Mammary epithelial cell (primary cell): ENCODE measurements at regions of chr3 and their contacts with region 1.

Region 1: GRCh38 chr3:632572-633170 is 436.1 kb downstream of the CHL1 start:
- DNase-seq: peak; percentile 47
- H3K4me3 ChIP-seq: no peak overlapping the region
- H3K27ac ChIP-seq: no peak overlapping the region
- H3K4me1 ChIP-seq: no peaks in the 10 kb centered on the region
- H3K27me3 ChIP-seq: no peaks in the 10 kb centered on the region
- CTCF ChIP-seq: peak; percentile 72 to 75

Region 2: DNA sequence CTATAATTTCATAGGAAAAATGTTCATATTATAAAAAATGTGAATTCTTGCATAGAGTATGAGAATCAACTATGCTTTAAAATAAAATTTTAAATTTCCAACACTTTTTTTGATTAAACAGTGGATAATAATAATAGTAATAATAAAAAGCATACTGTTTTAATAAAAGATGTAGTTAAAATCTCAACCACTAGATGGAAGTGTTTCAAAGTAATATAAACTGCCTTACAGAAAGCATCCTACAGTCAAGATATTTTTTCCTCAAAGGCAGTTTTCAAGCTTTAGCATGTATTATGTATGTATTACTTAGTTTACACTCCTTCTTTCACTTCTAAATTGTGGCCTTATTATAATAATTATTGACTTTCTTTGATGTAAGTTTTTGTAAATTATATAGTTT is 218.6 kb before region 1 on chr3:
- CTCF ChIA-PET with region 1: no interaction called
- dilution Hi-C with region 1: no loop called
- in situ Hi-C with region 1: no loop called
- intact Hi-C with region 1: loop called (anchors 10 kb)
- DNase-seq: no peak
- H3K4me3 ChIP-seq: no peak overlapping the region
- H3K27ac ChIP-seq: no peak overlapping the region
- H3K4me1 ChIP-seq: no peaks in the 10 kb centered on the region
- H3K27me3 ChIP-seq: no peaks in the 10 kb centered on the region
- CTCF ChIP-seq: peak; percentile 13 to 36

Region 3: DNA sequence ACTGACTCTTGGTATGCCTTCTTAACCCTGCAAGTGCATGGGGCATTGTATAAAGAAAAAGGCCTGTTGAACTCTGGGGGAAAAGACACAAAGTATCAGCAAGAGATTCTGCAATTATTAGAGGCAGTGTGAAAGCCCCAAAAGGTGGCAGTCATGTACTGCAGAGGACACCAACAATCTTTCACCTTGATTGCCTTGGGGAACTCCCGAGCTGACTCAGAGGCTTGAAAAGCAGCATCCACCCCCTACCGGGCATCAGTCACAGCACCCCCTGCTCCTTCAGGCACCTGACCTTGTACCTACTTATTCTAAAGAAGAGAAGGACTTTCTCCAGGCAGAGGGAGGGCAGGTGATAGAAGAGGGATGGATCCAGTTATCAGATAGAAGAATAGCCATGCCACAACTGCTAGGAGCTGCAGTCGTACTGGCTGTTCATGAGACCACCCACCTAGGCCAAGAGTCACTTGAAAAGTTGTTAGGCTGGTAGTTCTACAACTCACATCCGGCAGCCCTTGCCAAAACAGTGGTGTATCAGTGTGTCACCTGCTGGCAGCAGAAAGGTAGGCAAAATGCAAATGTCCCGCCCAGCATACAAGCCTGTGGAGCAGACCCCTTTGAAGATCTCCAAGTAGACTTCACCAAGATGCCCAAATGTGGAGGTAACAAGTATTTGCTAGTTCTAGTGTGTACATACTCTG is 218.6 kb after region 1 on chr3:
- CTCF ChIA-PET with region 1: no interaction called
- dilution Hi-C with region 1: no loop called
- in situ Hi-C with region 1: loop called (anchors 5 to 25 kb)
- intact Hi-C with region 1: loop called (anchors 1 kb)
- DNase-seq: peak; percentile 63
- H3K4me3 ChIP-seq: no peak overlapping the region
- H3K27ac ChIP-seq: no peak overlapping the region
- H3K4me1 ChIP-seq: no peaks in the 10 kb centered on the region
- H3K27me3 ChIP-seq: no peaks in the 10 kb centered on the region
- CTCF ChIP-seq: peak in 1 of 2 donors; percentile 41

Region 4: GRCh38 chr3:901953-902778 is 269.5 kb after region 1 on chr3:
- CTCF ChIA-PET with region 1: no interaction called
- dilution Hi-C with region 1: no loop called
- in situ Hi-C with region 1: no loop called
- intact Hi-C with region 1: loop called (anchors 1 kb)
- DNase-seq: peak; percentile 5
- H3K4me3 ChIP-seq: no peak overlapping the region
- H3K27ac ChIP-seq: no peak overlapping the region
- H3K4me1 ChIP-seq: no peaks in the 10 kb centered on the region
- H3K27me3 ChIP-seq: no peaks in the 10 kb centered on the region
- CTCF ChIP-seq: peak; percentile 49 to 57

Region 5: GRCh38 chr3:1082108-1082507 is 449.4 kb after region 1 on chr3:
- CTCF ChIA-PET with region 1: no interaction called
- dilution Hi-C with region 1: no loop called
- in situ Hi-C with region 1: no loop called
- intact Hi-C with region 1: loop called (anchors 5 kb)
- DNase-seq: peak; percentile 27
- H3K4me3 ChIP-seq: no peak overlapping the region
- H3K27ac ChIP-seq: no peak overlapping the region
- H3K4me1 ChIP-seq: no peaks in the 10 kb centered on the region
- H3K27me3 ChIP-seq: no peaks in the 10 kb centered on the region
- CTCF ChIP-seq: peak; percentile 67 to 80